ENCODE measurements at regions of chr20 and their contacts with region 1.

Region 1: GRCh38 chr20:45771182-45771759 is 20.4 kb downstream of the WFDC3 start:
- DNase-seq: peak; percentile 58 to 87 (median 80)
- ATAC-seq: peak; percentile 90
- H3K4me3 ChIP-seq: no peak overlapping the region
- H3K4me3 Mint-ChIP-seq: no peak overlapping the region
- H3K27ac ChIP-seq: no peak overlapping the region
- H3K27ac Mint-ChIP-seq: no peak overlapping the region
- H3K4me1 ChIP-seq: peaks cover 4% of the 10 kb centered on the region
- H3K4me1 Mint-ChIP-seq: peaks cover 5% of the 10 kb centered on the region
- H3K27me3 ChIP-seq: no peaks in the 10 kb centered on the region
- H3K27me3 Mint-ChIP-seq: peaks cover 19% of the 10 kb centered on the region
- CTCF ChIP-seq: peak; percentile 91

Region 2: DNA sequence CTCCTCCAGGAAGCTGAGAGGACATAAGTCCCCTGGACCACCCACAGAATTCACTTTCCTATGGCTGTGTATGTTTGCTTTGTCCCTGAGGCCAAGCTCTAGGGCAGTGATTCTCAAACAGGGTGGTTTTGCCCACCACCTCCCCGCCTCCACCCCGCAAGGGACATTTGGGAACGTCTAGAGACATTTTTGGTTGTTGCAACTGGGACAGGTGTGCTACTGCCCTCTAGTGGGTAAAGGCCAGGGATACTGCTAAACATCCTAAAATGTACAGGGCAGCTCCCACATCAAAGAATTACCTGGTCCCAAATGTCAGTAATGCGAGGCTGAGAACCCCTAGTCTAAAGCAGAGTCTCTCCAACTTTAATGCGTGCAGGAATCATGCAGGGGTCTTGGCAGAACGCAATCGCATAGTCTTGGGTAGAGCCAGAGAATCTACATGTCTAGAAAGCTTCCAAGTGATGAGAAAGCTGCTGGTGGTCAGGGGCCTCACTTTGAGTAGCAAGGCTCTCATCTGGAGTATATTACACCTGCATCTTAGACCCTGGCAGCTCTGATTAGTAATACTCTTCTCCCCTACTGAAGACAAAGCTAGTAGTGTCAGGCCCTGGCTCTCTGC is 675.4 kb before region 1 on chr20:
- CTCF ChIA-PET with region 1: interaction called, 7 read pairs
- POLR2A ChIA-PET with region 1: no interaction called
- intact Hi-C with region 1: loop called in 1 of 2 experiments (anchors 2 kb)
- DNase-seq: peak; percentile 18 to 78 (median 62)
- ATAC-seq: peak; percentile 69
- H3K4me3 ChIP-seq: no peak overlapping the region
- H3K4me3 Mint-ChIP-seq: no peak overlapping the region
- H3K27ac ChIP-seq: no peak overlapping the region
- H3K27ac Mint-ChIP-seq: no peak overlapping the region
- H3K4me1 ChIP-seq: peaks cover 10% of the 10 kb centered on the region
- H3K4me1 Mint-ChIP-seq: peaks cover 17% of the 10 kb centered on the region
- H3K27me3 ChIP-seq: peaks cover 2 to 16% of the 10 kb centered on the region in 2 experiments
- H3K27me3 Mint-ChIP-seq: peaks cover 28% of the 10 kb centered on the region
- CTCF ChIP-seq: peak; percentile 74

Region 3: DNA sequence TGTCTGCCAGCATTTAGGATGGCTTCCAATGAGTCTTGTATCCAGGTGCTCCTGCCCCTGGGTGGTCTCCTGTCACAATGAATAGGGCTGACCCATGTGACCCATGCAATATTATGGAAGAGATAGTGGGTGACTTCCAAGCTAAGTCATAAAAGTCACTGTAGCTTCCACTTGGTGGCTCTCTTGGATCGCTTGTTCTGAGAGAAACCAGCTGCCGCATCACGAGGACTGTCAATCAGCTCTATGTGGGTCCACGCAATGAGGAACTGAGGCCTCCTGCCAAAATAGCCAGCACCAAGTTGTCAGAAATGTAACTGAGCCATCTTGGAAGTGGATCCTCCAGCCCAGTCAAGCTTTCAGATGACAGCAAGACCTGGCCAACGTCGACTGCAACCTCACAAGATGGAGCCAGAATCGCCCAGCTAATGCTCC is 448.3 kb before region 1 on chr20:
- CTCF ChIA-PET with region 1: interaction called, 168 read pairs
- POLR2A ChIA-PET with region 1: no interaction called
- intact Hi-C with region 1: loop called in 1 of 2 experiments (anchors 1 kb)
- DNase-seq: peak in 1 of 9 experiments; percentile 26
- ATAC-seq: no peak
- H3K4me3 ChIP-seq: no peak overlapping the region
- H3K4me3 Mint-ChIP-seq: no peak overlapping the region
- H3K27ac ChIP-seq: no peak overlapping the region
- H3K27ac Mint-ChIP-seq: no peak overlapping the region
- H3K4me1 ChIP-seq: peaks cover 26% of the 10 kb centered on the region
- H3K4me1 Mint-ChIP-seq: peaks cover 17% of the 10 kb centered on the region
- H3K27me3 ChIP-seq: no peaks in the 10 kb centered on the region
- H3K27me3 Mint-ChIP-seq: no peaks in the 10 kb centered on the region
- CTCF ChIP-seq: no peak

Region 4: GRCh38 chr20:45368221-45368980 is 402.9 kb before region 1 on chr20:
- CTCF ChIA-PET with region 1: interaction called, 29 read pairs
- POLR2A ChIA-PET with region 1: no interaction called
- intact Hi-C with region 1: loop called (anchors 1 to 2 kb)
- DNase-seq: peak in 6 of 9 experiments; percentile 20 to 74 (median 38)
- ATAC-seq: peak; percentile 56
- H3K4me3 ChIP-seq: no peak overlapping the region
- H3K4me3 Mint-ChIP-seq: peak overlapping the region; percentile 30
- H3K27ac ChIP-seq: peak overlapping the region in 1 of 2 experiments; percentile 74
- H3K27ac Mint-ChIP-seq: peak overlapping the region; percentile 83
- H3K4me1 ChIP-seq: peaks cover 51% of the 10 kb centered on the region
- H3K4me1 Mint-ChIP-seq: peaks cover 73% of the 10 kb centered on the region
- H3K27me3 ChIP-seq: no peaks in the 10 kb centered on the region
- H3K27me3 Mint-ChIP-seq: no peaks in the 10 kb centered on the region
- CTCF ChIP-seq: no peak

Region 5: GRCh38 chr20:45450097-45450818 is 321.0 kb before region 1 on chr20:
- CTCF ChIA-PET with region 1: interaction called, 22 read pairs
- POLR2A ChIA-PET with region 1: no interaction called
- intact Hi-C with region 1: loop called in 1 of 2 experiments (anchors 2 kb)
- DNase-seq: peak in 2 of 9 experiments; percentile 56 to 66
- ATAC-seq: peak; percentile 52
- H3K4me3 ChIP-seq: no peak overlapping the region
- H3K4me3 Mint-ChIP-seq: no peak overlapping the region
- H3K27ac ChIP-seq: no peak overlapping the region
- H3K27ac Mint-ChIP-seq: no peak overlapping the region
- H3K4me1 ChIP-seq: no peaks in the 10 kb centered on the region
- H3K4me1 Mint-ChIP-seq: peaks cover under 1% of the 10 kb centered on the region
- H3K27me3 ChIP-seq: no peaks in the 10 kb centered on the region
- H3K27me3 Mint-ChIP-seq: peaks cover 7% of the 10 kb centered on the region
- CTCF ChIP-seq: peak; percentile 64

Region 6: DNA sequence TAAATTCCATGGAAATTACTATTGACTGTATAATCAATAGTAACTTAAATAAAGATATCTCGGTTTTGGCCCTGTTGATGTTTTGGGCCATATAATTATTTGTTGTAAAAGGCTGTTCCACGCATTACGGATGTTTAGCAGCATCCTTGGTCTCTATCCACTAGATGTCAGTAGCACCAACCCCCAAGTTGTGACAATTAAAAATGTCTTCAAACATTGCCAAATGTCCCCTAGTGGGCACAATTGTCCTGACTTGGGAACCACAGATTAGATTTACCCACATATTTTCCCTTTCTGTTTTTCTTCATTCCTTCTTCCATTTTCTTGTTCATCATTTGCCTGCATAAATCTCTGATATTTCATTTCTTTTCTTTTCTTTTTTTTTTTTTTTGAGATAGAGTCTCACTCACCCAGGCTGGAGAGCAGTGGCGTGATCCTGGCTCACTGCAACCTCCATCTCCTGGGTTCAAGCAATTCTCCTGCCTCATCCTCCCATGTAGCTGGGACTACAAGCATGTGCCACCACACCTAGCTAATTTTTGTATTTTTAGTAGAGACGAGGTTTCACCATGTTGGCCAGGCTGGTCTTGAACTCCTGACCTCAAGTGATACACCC is 178.6 kb before region 1 on chr20:
- CTCF ChIA-PET with region 1: interaction called, 3 read pairs
- POLR2A ChIA-PET with region 1: no interaction called
- intact Hi-C with region 1: loop called in 1 of 2 experiments (anchors 1 kb)
- DNase-seq: peak in 2 of 9 experiments; percentile 30 to 57
- ATAC-seq: peak; percentile 36
- H3K4me3 ChIP-seq: no peak overlapping the region
- H3K4me3 Mint-ChIP-seq: no peak overlapping the region
- H3K27ac ChIP-seq: no peak overlapping the region
- H3K27ac Mint-ChIP-seq: no peak overlapping the region
- H3K4me1 ChIP-seq: no peaks in the 10 kb centered on the region
- H3K4me1 Mint-ChIP-seq: no peaks in the 10 kb centered on the region
- H3K27me3 ChIP-seq: no peaks in the 10 kb centered on the region
- H3K27me3 Mint-ChIP-seq: peaks cover 10% of the 10 kb centered on the region
- CTCF ChIP-seq: peak; percentile 53

Measured in CD8-positive, alpha-beta T cell (primary cell).